ENCODE measurements at regions of chr4 and their contacts with region 1.

Region 1: DNA sequence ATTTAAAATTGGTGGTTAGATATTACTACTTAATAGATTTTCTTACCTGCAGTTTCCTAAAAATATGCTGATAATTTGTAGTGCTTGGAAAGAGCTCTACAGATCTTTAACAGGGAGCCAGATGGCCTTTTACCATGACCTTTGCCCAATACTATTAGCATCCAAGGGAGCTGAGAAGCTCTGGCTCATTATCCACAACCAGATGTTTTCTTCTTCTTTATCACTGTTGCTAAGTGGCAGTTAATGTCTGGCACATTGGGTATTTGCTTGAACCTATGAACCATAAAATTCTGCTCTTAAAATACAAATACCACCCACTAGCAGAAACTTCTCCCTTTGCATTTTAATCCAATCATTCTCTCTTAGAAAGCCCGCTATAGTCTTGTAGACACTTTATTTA is 1480.3 kb downstream of the C4orf33 start:
- DNase-seq: no peak
- ATAC-seq: no peak
- H3K4me3 ChIP-seq: no peak overlapping the region
- H3K4me3 Mint-ChIP-seq: no peak overlapping the region
- H3K27ac ChIP-seq: no peak overlapping the region
- H3K27ac Mint-ChIP-seq: no peak overlapping the region
- H3K4me1 ChIP-seq: no peaks in the 10 kb centered on the region
- H3K4me1 Mint-ChIP-seq: no peaks in the 10 kb centered on the region
- H3K27me3 ChIP-seq: no peaks in the 10 kb centered on the region
- H3K27me3 Mint-ChIP-seq: no peaks in the 10 kb centered on the region

Region 2: GRCh38 chr4:129446074-129446473 is 1130.1 kb before region 1 on chr4:
- CTCF ChIA-PET with region 1: no interaction called
- POLR2A ChIA-PET with region 1: no interaction called
- intact Hi-C with region 1: loop called in 1 of 2 experiments (anchors 10 kb)
- DNase-seq: no peak
- ATAC-seq: no peak
- H3K4me3 ChIP-seq: no peak overlapping the region
- H3K4me3 Mint-ChIP-seq: no peak overlapping the region
- H3K27ac ChIP-seq: no peak overlapping the region
- H3K27ac Mint-ChIP-seq: no peak overlapping the region
- H3K4me1 ChIP-seq: no peaks in the 10 kb centered on the region
- H3K4me1 Mint-ChIP-seq: no peaks in the 10 kb centered on the region
- H3K27me3 ChIP-seq: no peaks in the 10 kb centered on the region
- H3K27me3 Mint-ChIP-seq: peaks cover 0 to 6% (median 0%) of the 10 kb centered on the region in 5 donors

Region 3: GRCh38 chr4:129994715-129995114 is 581.5 kb before region 1 on chr4:
- CTCF ChIA-PET with region 1: no interaction called
- POLR2A ChIA-PET with region 1: no interaction called
- intact Hi-C with region 1: no loop called
- DNase-seq: no peak
- ATAC-seq: no peak
- H3K4me3 ChIP-seq: no peak overlapping the region
- H3K4me3 Mint-ChIP-seq: no peak overlapping the region
- H3K27ac ChIP-seq: no peak overlapping the region
- H3K27ac Mint-ChIP-seq: no peak overlapping the region
- H3K4me1 ChIP-seq: no peaks in the 10 kb centered on the region
- H3K4me1 Mint-ChIP-seq: no peaks in the 10 kb centered on the region
- H3K27me3 ChIP-seq: no peaks in the 10 kb centered on the region
- H3K27me3 Mint-ChIP-seq: no peaks in the 10 kb centered on the region

Region 4: GRCh38 chr4:130296454-130296853 is 279.8 kb before region 1 on chr4:
- CTCF ChIA-PET with region 1: no interaction called
- POLR2A ChIA-PET with region 1: no interaction called
- intact Hi-C with region 1: no loop called
- DNase-seq: no peak
- ATAC-seq: no peak
- H3K4me3 ChIP-seq: no peak overlapping the region
- H3K4me3 Mint-ChIP-seq: no peak overlapping the region
- H3K27ac ChIP-seq: no peak overlapping the region
- H3K27ac Mint-ChIP-seq: no peak overlapping the region
- H3K4me1 ChIP-seq: no peaks in the 10 kb centered on the region
- H3K4me1 Mint-ChIP-seq: no peaks in the 10 kb centered on the region
- H3K27me3 ChIP-seq: no peaks in the 10 kb centered on the region
- H3K27me3 Mint-ChIP-seq: no peaks in the 10 kb centered on the region

Region 5: GRCh38 chr4:130524057-130524456 is 52.2 kb before region 1 on chr4:
- CTCF ChIA-PET with region 1: no interaction called
- POLR2A ChIA-PET with region 1: no interaction called
- intact Hi-C with region 1: no loop called
- DNase-seq: no peak
- ATAC-seq: no peak
- H3K4me3 ChIP-seq: no peak overlapping the region
- H3K4me3 Mint-ChIP-seq: no peak overlapping the region
- H3K27ac ChIP-seq: no peak overlapping the region
- H3K27ac Mint-ChIP-seq: no peak overlapping the region
- H3K4me1 ChIP-seq: no peaks in the 10 kb centered on the region
- H3K4me1 Mint-ChIP-seq: no peaks in the 10 kb centered on the region
- H3K27me3 ChIP-seq: no peaks in the 10 kb centered on the region
- H3K27me3 Mint-ChIP-seq: no peaks in the 10 kb centered on the region